ENCODE measurements at regions of chr2 and their contacts with region 1.

Region 1: DNA sequence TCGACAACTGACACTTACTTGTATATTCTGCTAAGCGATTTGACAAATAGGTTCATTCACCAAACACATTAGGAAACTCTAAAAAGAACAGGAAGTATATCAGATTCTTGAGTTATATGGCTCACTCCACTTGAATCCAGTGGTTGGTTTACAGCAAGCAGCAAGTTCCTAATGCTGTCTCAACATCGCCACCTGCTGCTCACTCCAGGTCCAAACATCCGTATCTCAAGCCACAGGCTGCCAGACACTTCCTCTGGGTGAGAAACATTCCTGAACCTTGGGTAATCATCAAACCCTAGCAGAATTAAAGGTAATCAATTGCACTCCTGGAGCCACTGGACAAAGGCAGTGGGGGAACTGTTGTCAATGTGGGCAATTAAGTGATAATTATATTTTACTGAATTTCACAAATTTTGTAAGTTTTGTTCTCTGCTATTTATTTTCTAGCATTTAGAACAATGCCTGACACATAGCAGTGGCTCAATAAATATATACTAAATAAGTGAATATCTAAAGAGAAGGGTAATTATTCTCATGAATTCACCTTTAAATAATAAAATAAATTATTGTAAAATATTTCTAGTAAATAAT is 107.1 kb upstream of the TTN start:
- DNase-seq: peak; percentile 77 to 88 (median 80)
- ATAC-seq: peak; percentile 41 to 89 (median 86)
- H3K4me3 ChIP-seq: no peak overlapping the region
- H3K27ac ChIP-seq: no peak overlapping the region
- H3K4me1 ChIP-seq: peaks cover 0 to 29% (median 5%) of the 10 kb centered on the region in 12 donors
- H3K27me3 ChIP-seq: no peaks in the 10 kb centered on the region
- CTCF ChIP-seq: peak; percentile 78 to 94 (median 87)
- POLR2A ChIP-seq: no peak

Region 2: GRCh38 chr2:178796079-178796677 is 118.2 kb before region 1 on chr2:
- intact Hi-C with region 1: loop called (anchors 1 to 5 kb)
- DNase-seq: no peak
- ATAC-seq: no peak
- H3K4me3 ChIP-seq: peak overlapping the region in 1 of 12 donors; percentile 10
- H3K27ac ChIP-seq: no peak overlapping the region
- H3K4me1 ChIP-seq: peaks cover 0 to 50% (median 2%) of the 10 kb centered on the region in 12 donors
- H3K27me3 ChIP-seq: no peaks in the 10 kb centered on the region
- CTCF ChIP-seq: peak; percentile 47 to 80 (median 65)
- POLR2A ChIP-seq: no peak

Region 3: GRCh38 chr2:178804791-178805190 is 109.6 kb before region 1 on chr2:
- intact Hi-C with region 1: loop called in 3 of 10 experiments (anchors 2 to 5 kb)
- DNase-seq: peak in 1 of 5 donors; percentile 6
- ATAC-seq: peak in 2 of 4 donors; percentile 2 to 5
- H3K4me3 ChIP-seq: peak overlapping the region; percentile 25 to 66 (median 55)
- H3K27ac ChIP-seq: peak overlapping the region; percentile 39 to 97 (median 91)
- H3K4me1 ChIP-seq: peaks cover 0 to 3% (median 0%) of the 10 kb centered on the region in 12 donors
- H3K27me3 ChIP-seq: no peaks in the 10 kb centered on the region
- CTCF ChIP-seq: peak; percentile 24 to 67 (median 52)
- POLR2A ChIP-seq: no peak

Region 4: GRCh38 chr2:178829299-178829960 is 84.9 kb before region 1 on chr2:
- intact Hi-C with region 1: no loop called
- DNase-seq: no peak
- ATAC-seq: peak; percentile 28 to 45 (median 32)
- H3K4me3 ChIP-seq: peak overlapping the region in 1 of 12 donors; percentile 24
- H3K27ac ChIP-seq: peak overlapping the region in 8 of 12 donors; percentile 1 to 66 (median 24)
- H3K4me1 ChIP-seq: peaks cover 0 to 39% (median 25%) of the 10 kb centered on the region in 12 donors
- H3K27me3 ChIP-seq: no peaks in the 10 kb centered on the region
- CTCF ChIP-seq: peak in 1 of 12 donors; percentile 7
- POLR2A ChIP-seq: no peak

Region 5: GRCh38 chr2:178891265-178891958 is 22.9 kb before region 1 on chr2:
- intact Hi-C with region 1: loop called in 1 of 10 experiments (anchors 1 kb)
- DNase-seq: peak in 4 of 5 donors; percentile 46 to 63 (median 49)
- ATAC-seq: peak; percentile 51 to 67 (median 60)
- H3K4me3 ChIP-seq: no peak overlapping the region
- H3K27ac ChIP-seq: peak overlapping the region in 10 of 12 donors; percentile 8 to 65 (median 28)
- H3K4me1 ChIP-seq: peaks cover 0 to 41% (median 13%) of the 10 kb centered on the region in 12 donors
- H3K27me3 ChIP-seq: no peaks in the 10 kb centered on the region
- CTCF ChIP-seq: peak; percentile 86 to 96 (median 94)
- POLR2A ChIP-seq: no peak

Measured in heart left ventricle (tissue), 16 donors.